ENCODE measurements at regions of chr6 and their contacts with region 1.

Region 1: GRCh38 chr6:100479179-100480035 is 14.7 kb upstream of the SIM1 start:
- DNase-seq: no peak
- ATAC-seq: peak; percentile 34
- H3K4me3 ChIP-seq: no peak overlapping the region
- H3K4me3 Mint-ChIP-seq: no peak overlapping the region
- H3K27ac ChIP-seq: no peak overlapping the region
- H3K27ac Mint-ChIP-seq: no peak overlapping the region
- H3K4me1 ChIP-seq: no peaks in the 10 kb centered on the region
- H3K4me1 Mint-ChIP-seq: no peaks in the 10 kb centered on the region
- H3K27me3 ChIP-seq: no peaks in the 10 kb centered on the region
- H3K27me3 Mint-ChIP-seq: peaks cover 26 to 37% (median 28%) of the 10 kb centered on the region in 5 donors

Region 2: GRCh38 chr6:100176311-100176950 is 303.0 kb before region 1 on chr6:
- CTCF ChIA-PET with region 1: no interaction called
- POLR2A ChIA-PET with region 1: no interaction called
- intact Hi-C with region 1: loop called in 1 of 2 experiments (anchors 2 kb)
- DNase-seq: no peak
- ATAC-seq: no peak
- H3K4me3 ChIP-seq: no peak overlapping the region
- H3K4me3 Mint-ChIP-seq: no peak overlapping the region
- H3K27ac ChIP-seq: no peak overlapping the region
- H3K27ac Mint-ChIP-seq: no peak overlapping the region
- H3K4me1 ChIP-seq: no peaks in the 10 kb centered on the region
- H3K4me1 Mint-ChIP-seq: peaks cover 0 to 6% (median 0%) of the 10 kb centered on the region in 7 donors
- H3K27me3 ChIP-seq: no peaks in the 10 kb centered on the region
- H3K27me3 Mint-ChIP-seq: peaks cover 3 to 13% (median 10%) of the 10 kb centered on the region in 5 donors

Region 3: DNA sequence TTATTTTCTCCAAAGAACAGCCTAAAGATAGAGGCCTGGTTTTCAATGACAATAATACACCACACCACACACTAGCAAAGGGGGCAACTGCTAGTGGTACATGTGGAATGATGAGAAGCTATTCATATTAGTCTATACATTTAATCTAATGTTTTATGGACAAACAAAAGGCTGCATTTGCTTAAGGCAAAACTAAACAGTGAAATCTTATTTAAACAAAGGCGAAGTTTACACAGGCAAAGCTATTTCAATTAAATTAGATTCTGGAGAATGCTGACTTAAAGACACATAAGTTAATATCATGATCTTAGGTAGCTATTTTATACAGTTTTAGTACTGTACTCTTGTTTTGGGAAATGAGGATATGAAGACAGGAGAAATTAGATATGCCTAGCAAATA is 39.2 kb after region 1 on chr6:
- CTCF ChIA-PET with region 1: no interaction called
- POLR2A ChIA-PET with region 1: no interaction called
- intact Hi-C with region 1: no loop called
- DNase-seq: no peak
- ATAC-seq: no peak
- H3K4me3 ChIP-seq: no peak overlapping the region
- H3K4me3 Mint-ChIP-seq: no peak overlapping the region
- H3K27ac ChIP-seq: no peak overlapping the region
- H3K27ac Mint-ChIP-seq: no peak overlapping the region
- H3K4me1 ChIP-seq: no peaks in the 10 kb centered on the region
- H3K4me1 Mint-ChIP-seq: peaks cover 0 to 5% (median 0%) of the 10 kb centered on the region in 7 donors
- H3K27me3 ChIP-seq: no peaks in the 10 kb centered on the region
- H3K27me3 Mint-ChIP-seq: no peaks in the 10 kb centered on the region

Region 4: DNA sequence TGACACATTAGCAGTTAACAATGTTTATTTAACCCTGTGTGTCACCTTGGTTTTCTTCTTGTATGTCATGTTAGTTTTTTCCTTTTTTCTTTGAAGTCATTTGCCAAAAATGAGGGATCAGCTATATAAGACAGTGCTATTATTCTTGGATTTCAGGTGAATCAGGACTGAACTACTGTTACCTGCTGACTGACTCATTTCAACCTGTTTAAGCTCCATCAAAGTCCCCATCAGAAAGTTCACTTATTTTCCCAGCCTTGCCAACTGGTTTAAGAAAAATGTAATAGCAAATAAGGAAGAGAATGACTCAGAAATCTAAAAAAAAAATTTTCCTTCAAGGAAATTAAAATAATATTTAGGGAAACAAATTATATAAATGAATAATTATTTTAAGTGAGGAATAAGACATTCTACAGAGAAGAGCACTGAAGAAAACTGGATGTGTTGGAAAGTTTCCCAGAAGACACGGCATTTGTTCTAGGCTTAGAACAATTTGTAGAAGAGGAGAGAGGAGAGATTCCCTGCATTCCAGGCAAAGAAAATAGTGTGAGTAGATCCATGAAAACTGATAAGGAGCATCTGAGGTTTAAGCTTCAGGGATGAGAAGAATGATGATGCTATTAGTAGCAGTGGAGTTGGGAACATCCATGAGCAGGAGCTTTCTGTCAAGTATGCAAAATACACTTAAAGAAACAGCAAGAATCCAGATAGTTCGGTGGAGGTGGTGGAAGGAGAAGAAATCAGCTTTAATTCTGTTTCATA is 70.2 kb after region 1 on chr6:
- CTCF ChIA-PET with region 1: no interaction called
- POLR2A ChIA-PET with region 1: no interaction called
- intact Hi-C with region 1: no loop called
- DNase-seq: no peak
- ATAC-seq: no peak
- H3K4me3 ChIP-seq: no peak overlapping the region
- H3K4me3 Mint-ChIP-seq: no peak overlapping the region
- H3K27ac ChIP-seq: no peak overlapping the region
- H3K27ac Mint-ChIP-seq: no peak overlapping the region
- H3K4me1 ChIP-seq: no peaks in the 10 kb centered on the region
- H3K4me1 Mint-ChIP-seq: peaks cover 0 to 3% (median 0%) of the 10 kb centered on the region in 7 donors
- H3K27me3 ChIP-seq: no peaks in the 10 kb centered on the region
- H3K27me3 Mint-ChIP-seq: no peaks in the 10 kb centered on the region

Region 5: DNA sequence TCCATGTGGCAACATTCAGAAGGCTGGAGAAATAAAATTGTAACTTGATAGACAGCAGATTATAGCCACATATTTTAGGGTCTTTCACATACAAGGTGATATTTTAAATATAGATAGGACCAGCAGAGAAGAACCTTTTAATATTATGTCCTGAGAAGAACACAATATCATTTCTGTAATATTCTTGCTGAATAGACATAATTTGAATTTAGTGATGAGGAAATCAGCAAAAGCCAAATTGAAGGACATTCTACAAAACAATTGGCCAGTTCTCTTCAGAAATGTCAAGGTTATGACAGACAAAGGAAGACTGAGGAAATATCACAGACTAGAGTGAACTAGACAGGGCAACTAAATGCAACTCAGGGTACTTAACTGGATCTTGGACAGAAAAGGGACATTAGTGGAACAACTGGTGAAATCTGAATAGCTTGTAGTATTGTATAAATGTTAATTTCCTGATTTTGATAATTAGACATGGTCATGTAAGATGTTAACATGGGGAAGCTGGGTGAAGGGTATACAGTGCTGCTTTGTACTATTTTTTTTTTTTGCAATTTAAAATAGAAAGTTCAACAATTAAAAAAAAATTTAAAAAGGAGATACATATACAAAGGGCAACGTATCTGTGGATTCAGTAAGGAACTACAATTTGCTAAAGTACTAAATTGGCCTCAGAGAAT is 119.8 kb after region 1 on chr6:
- CTCF ChIA-PET with region 1: no interaction called
- POLR2A ChIA-PET with region 1: no interaction called
- intact Hi-C with region 1: no loop called
- DNase-seq: no peak
- ATAC-seq: no peak
- H3K4me3 ChIP-seq: no peak overlapping the region
- H3K4me3 Mint-ChIP-seq: no peak overlapping the region
- H3K27ac ChIP-seq: no peak overlapping the region
- H3K27ac Mint-ChIP-seq: peak overlapping the region in 1 of 9 donors; percentile 1
- H3K4me1 ChIP-seq: no peaks in the 10 kb centered on the region
- H3K4me1 Mint-ChIP-seq: no peaks in the 10 kb centered on the region
- H3K27me3 ChIP-seq: no peaks in the 10 kb centered on the region
- H3K27me3 Mint-ChIP-seq: no peaks in the 10 kb centered on the region

Measured in naive thymus-derived CD4-positive, alpha-beta T cell (primary cell).